Activated T-helper 2 cell treated with anti-CD3 and anti-CD28 coated beads, Interferon-gamma antibody, Interleukin-2, Interleukin-4, amounts not matched to agents 10 μg/mL and 5 μg/mL and 100 μg/mL, durations not matched to agents 14 hours and 24 hours and 36 hours (primary cell): ENCODE measurements at regions of chr17 and their contacts with region 1.

Region 1: DNA sequence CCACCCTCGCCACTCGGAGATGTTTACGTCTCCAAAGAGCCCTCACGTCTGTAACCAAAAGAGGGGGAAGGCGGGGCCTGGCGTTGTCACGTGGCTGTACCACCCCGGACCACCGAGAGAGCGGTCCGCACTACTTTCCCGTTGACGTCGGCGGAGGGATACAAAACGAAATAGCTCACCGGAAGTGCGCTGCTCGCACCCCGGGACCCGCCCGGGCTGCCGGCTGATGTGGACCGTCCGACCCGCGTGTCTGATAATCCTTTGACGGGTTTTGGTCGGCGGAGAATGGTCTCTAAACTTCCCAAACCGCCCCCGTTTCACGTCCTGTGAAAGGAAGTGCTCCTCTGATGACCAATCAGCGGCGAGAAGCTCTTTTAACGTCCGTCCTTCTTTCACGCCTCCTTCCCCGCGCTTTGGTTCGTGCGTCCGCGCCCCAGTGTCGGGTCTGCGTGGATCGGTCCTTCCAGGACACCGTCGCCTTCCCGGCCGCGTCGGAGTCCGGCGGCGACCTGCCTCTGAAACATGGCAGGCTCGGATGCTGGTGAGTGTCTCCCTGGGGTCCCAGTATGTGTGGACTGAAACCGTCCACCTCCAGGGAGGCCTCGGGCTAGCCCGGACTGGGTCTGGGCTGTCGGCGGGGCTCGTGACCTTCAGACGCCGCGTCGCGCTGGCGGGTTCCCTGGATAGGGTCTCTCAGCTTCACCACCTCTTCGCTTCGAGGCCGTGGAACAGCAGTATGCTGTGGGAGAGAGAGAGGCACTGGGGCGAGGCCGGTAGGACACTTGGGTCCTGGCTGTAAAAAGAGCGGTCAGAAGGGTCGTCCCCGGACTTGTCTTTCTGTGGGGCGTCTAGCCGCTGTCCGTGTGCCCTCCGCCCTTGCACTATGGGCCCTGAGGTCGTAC is at the start of gene CEP95:
- DNase-seq: peak; percentile 95
- H3K4me3 Mint-ChIP-seq: peak within 1 kb of the TSS; percentile 98
- H3K27ac Mint-ChIP-seq: peak within 1 kb of the TSS; percentile 100
- H3K4me1 Mint-ChIP-seq: peaks cover 41% of the 10 kb centered on the region
- H3K27me3 Mint-ChIP-seq: no peaks in the 10 kb centered on the region
- total RNA-seq, gene CEP95: 44.9 and 45.2 TPM in 2 replicates

Region 2: GRCh38 chr17:63773381-63774140 is 733.3 kb before region 1 on chr17 and contains the start of gene CCDC47:
- intact Hi-C with region 1: loop called (anchors 10 kb)
- DNase-seq: peak; percentile 99
- H3K4me3 Mint-ChIP-seq: peak within 1 kb of the TSS; percentile 92
- H3K27ac Mint-ChIP-seq: peak within 1 kb of the TSS; percentile 99
- H3K4me1 Mint-ChIP-seq: peaks cover 36% of the 10 kb centered on the region
- H3K27me3 Mint-ChIP-seq: no peaks in the 10 kb centered on the region
- total RNA-seq, gene CCDC47: 70.0 and 73.7 TPM in 2 replicates

Region 3: DNA sequence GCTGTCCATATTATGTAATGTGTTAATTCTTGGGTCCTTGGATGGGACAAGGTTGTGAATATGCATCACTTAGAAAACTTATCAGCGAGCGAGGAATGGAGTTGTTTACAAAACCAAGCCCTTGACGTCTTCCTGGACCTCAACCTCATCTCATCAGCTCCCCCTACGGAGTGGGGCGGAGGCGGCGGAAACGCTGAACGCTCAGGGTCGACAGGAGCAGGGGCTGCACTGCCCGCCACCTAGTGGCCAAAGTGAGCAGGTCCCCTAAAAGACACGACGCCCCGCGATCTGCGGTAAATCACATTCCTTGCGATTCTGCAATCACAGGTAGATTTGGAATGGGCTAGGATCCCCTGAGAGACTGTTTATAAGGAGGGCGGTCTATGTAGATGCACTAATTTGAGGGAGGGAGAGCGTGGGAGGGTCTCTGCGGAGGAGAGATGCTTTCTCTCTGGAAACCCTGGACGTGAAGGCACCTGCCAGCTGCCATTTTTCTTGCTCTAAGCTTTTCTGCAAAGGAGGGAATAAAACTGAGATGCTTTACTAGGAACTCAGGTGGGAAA is 481.0 kb before region 1 on chr17:
- intact Hi-C with region 1: loop called (anchors 5 kb)
- DNase-seq: peak; percentile 88
- H3K4me3 Mint-ChIP-seq: peak overlapping the region; percentile 74
- H3K27ac Mint-ChIP-seq: peak overlapping the region; percentile 93
- H3K4me1 Mint-ChIP-seq: peaks cover 63% of the 10 kb centered on the region
- H3K27me3 Mint-ChIP-seq: no peaks in the 10 kb centered on the region

Region 4: GRCh38 chr17:64599187-64599676 is 92.4 kb after region 1 on chr17:
- intact Hi-C with region 1: loop called (anchors 5 kb)
- DNase-seq: peak; percentile 52
- H3K4me3 Mint-ChIP-seq: peak overlapping the region; percentile 66
- H3K27ac Mint-ChIP-seq: peak overlapping the region; percentile 79
- H3K4me1 Mint-ChIP-seq: peaks cover 35% of the 10 kb centered on the region
- H3K27me3 Mint-ChIP-seq: no peaks in the 10 kb centered on the region

Region 5: DNA sequence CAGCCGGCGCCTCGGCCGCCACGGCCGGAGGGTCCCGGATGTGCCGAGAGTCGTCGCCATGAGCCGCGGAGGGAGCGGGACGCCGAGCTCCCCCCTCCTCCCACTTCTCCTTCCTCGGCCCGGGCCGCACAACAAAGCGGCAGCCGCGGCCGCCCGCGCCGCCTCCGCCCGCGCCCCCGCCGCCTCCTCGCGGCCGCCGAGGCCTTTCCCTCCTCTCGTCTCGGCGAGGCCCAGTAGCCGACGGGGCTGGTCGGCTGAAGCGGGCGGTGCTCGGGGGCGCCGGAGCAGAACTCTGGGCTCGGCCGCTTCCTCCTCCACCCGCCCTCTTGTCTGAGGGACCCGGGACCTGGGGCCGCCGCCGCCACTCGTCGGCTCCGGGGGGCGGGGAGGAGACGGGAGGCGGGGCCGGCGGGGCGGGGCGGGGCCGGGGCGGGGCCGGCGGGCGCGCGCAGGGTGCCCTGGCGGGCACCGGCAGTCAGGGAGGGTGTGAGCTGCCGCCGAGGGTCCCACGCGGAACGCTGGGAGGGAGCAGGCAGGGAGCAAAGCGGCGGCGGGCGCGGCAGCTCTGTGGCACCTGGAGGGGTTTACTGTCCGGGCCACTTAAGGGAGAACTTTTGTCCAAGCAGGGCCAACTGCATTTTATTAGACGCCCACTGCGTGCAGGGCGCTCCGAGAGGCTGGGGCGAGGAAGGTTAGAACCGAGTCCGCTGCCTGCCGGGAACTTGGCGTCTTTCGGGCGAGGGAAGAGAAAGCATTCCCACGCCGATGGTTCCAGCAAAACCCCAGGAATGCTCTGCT is 155.3 kb after region 1 on chr17 and contains the start of gene SMURF2:
- intact Hi-C with region 1: loop called (anchors 2 kb)
- DNase-seq: peak; percentile 75
- H3K4me3 Mint-ChIP-seq: peak within 1 kb of the TSS; percentile 96
- H3K27ac Mint-ChIP-seq: peak within 1 kb of the TSS; percentile 94
- H3K4me1 Mint-ChIP-seq: peaks cover 27% of the 10 kb centered on the region
- H3K27me3 Mint-ChIP-seq: no peaks in the 10 kb centered on the region
- total RNA-seq, gene SMURF2: 12.6 and 13.1 TPM in 2 replicates

Region 6: DNA sequence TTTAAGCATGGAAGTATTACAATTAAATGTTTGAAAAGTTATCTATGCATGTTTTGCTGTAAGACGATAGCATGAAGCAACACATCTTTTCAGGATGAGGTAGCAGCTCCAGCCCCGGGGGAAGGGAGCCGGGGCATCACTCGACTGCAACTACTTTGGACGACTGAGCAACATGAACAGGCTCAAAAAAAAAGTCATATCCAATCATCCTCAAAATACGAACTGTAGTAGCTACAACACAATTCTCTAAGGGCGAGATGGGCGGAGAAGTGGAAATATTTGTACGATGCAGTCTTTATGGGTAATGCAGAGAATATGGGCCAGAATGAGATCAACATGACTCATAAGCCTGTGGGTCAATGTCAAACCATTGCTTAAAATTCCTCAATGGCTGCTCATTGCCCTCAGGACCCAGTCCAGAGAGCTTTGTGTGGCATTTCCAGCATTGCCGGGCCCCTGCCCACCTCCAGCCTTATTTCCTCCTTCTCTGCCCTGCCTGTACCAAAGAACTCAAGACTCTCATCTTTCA is 172.9 kb after region 1 on chr17:
- intact Hi-C with region 1: no loop called
- DNase-seq: no peak
- H3K4me3 Mint-ChIP-seq: no peak overlapping the region
- H3K27ac Mint-ChIP-seq: no peak overlapping the region
- H3K4me1 Mint-ChIP-seq: peaks cover 2% of the 10 kb centered on the region
- H3K27me3 Mint-ChIP-seq: no peaks in the 10 kb centered on the region

Region 7: GRCh38 chr17:65055348-65056261 is 548.8 kb after region 1 on chr17:
- intact Hi-C with region 1: loop called (anchors 5 kb)
- DNase-seq: peak; percentile 54
- H3K4me3 Mint-ChIP-seq: peak overlapping the region; percentile 89
- H3K27ac Mint-ChIP-seq: peak overlapping the region; percentile 91
- H3K4me1 Mint-ChIP-seq: peaks cover 44% of the 10 kb centered on the region
- H3K27me3 Mint-ChIP-seq: peaks cover 2% of the 10 kb centered on the region